ENCODE measurements at regions of chr20 and their contacts with region 1.

Region 1: GRCh38 chr20:53883098-53883811 is 187.1 kb downstream of the BCAS1 start:
- DNase-seq: no peak
- ATAC-seq: no peak
- H3K4me3 Mint-ChIP-seq: peak overlapping the region in 2 of 10 donors; percentile 15 to 33
- H3K27ac Mint-ChIP-seq: peak overlapping the region in 8 of 10 donors; percentile 53 to 100 (median 90)
- H3K4me1 Mint-ChIP-seq: peaks cover 21 to 62% (median 48%) of the 10 kb centered on the region in 4 donors
- H3K27me3 Mint-ChIP-seq: no peaks in the 10 kb centered on the region

Region 2: GRCh38 chr20:53899351-53900167 is 16.3 kb after region 1 on chr20:
- POLR2A ChIA-PET with region 1: interaction called, 18 read pairs
- DNase-seq: peak; percentile 20 to 83 (median 63)
- ATAC-seq: peak; percentile 98 to 100
- H3K4me3 Mint-ChIP-seq: peak overlapping the region in 9 of 10 donors; percentile 24 to 68 (median 49)
- H3K27ac Mint-ChIP-seq: peak overlapping the region in 9 of 10 donors; percentile 73 to 95 (median 90)
- H3K4me1 Mint-ChIP-seq: peaks cover 20 to 62% (median 53%) of the 10 kb centered on the region in 4 donors
- H3K27me3 Mint-ChIP-seq: no peaks in the 10 kb centered on the region

Region 3: GRCh38 chr20:53907968-53908751 is 24.9 kb after region 1 on chr20:
- POLR2A ChIA-PET with region 1: interaction called, 14 read pairs
- DNase-seq: no peak
- ATAC-seq: no peak
- H3K4me3 Mint-ChIP-seq: no peak overlapping the region
- H3K27ac Mint-ChIP-seq: peak overlapping the region in 2 of 10 donors; percentile 36 to 48
- H3K4me1 Mint-ChIP-seq: peaks cover 18 to 42% (median 30%) of the 10 kb centered on the region in 4 donors
- H3K27me3 Mint-ChIP-seq: no peaks in the 10 kb centered on the region

Region 4: GRCh38 chr20:54014293-54014926 is 131.2 kb after region 1 on chr20:
- POLR2A ChIA-PET with region 1: no interaction called
- DNase-seq: no peak
- ATAC-seq: no peak
- H3K4me3 Mint-ChIP-seq: no peak overlapping the region
- H3K27ac Mint-ChIP-seq: no peak overlapping the region
- H3K4me1 Mint-ChIP-seq: peaks cover 0 to 11% (median under 1%) of the 10 kb centered on the region in 4 donors
- H3K27me3 Mint-ChIP-seq: peaks cover 0 to 6% (median 0%) of the 10 kb centered on the region in 5 donors